ENCODE measurements at regions of chr6 and their contacts with region 1.

Region 1: DNA sequence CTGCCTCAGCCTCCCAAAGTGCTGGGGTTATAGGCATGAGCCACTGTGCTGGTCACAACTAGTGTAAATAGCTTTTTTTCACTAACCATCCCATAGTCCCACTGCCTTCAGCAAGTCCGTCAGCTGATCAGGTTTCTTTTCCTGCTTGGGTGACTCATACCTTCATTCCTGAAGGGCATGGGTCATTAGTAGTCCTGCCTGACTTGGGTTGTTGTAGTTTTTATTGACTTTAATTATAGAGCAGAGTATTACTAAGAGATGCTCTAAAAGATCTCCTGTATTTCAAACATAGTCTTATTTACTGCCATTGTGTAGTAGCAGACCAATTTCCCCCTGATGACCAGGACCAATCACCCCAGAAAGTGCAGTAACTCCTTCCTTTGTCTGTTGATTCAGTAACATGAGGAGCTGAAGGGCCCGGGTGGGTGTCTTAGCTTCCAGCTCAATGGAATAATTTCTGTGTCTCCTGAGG is 25.8 kb downstream of the HLA-C start:
- DNase-seq: no peak
- H3K4me3 ChIP-seq: no peak overlapping the region
- H3K27ac ChIP-seq: no peak overlapping the region
- H3K4me1 ChIP-seq: no peaks in the 10 kb centered on the region
- CTCF ChIP-seq: no peak

Region 2: GRCh38 chr6:31321820-31322219 is 75.7 kb after region 1 on chr6:
- CTCF ChIA-PET with region 1: no interaction called
- POLR2A ChIA-PET with region 1: no interaction called
- intact Hi-C with region 1: loop called (anchors 2 kb)
- DNase-seq: no peak
- H3K4me3 ChIP-seq: no peak overlapping the region
- H3K27ac ChIP-seq: no peak overlapping the region
- H3K4me1 ChIP-seq: no peaks in the 10 kb centered on the region
- CTCF ChIP-seq: no peak

Region 3: DNA sequence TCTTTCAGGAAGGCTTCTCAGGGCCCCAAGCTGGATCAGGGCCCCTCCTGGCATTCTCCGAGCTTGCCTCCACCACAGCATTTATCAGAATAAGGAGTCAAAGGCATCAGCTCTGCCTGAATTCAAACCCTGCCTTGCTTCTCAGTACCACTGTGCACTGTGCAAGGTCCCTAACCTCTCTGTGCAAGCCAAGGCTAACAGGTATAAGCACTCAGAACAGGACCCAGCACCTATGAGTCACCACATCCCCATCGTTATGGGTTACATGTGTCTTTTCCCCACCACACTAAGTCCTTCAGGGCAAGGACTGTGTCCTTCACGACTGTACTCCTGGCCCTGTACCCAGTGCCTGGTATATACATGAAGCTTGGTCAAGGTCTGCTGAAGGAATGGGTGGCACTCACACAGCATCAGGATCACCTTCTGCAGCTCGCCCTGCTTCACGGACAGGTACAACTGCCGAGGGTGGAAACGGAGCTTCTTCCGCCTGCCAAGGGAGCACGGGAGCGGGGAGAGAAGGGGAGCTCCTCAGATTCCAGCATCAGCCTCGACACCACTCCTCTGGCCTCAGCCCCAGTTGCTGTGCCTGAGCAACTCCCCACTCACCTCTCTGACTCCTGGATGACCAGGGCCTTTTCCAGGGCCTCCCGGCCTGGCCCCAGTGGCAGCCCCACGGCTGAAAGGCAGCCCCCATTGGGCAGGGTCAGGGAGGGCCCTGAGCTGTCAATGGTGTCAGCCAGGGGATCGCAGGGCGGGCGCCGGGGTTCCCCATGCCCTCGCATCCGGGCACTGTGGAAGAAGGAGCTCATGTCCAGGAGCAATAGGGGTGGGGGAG is 641.3 kb after region 1 on chr6:
- CTCF ChIA-PET with region 1: interaction called, 16 read pairs
- POLR2A ChIA-PET with region 1: no interaction called
- intact Hi-C with region 1: no loop called
- DNase-seq: no peak
- H3K4me3 ChIP-seq: no peak overlapping the region
- H3K27ac ChIP-seq: no peak overlapping the region
- H3K4me1 ChIP-seq: no peaks in the 10 kb centered on the region
- CTCF ChIP-seq: no peak

Measured in OCI-LY7 (cell line).